Motor neuron (in vitro differentiated cells): ENCODE measurements at regions of chr2 and their contacts with region 1.

Region 1: GRCh38 chr2:197804049-197804757 is at the start of gene PLCL1:
- ATAC-seq: peak; percentile 96 to 99 (median 97)
- H3K4me3 ChIP-seq: peak within 1 kb of the TSS; percentile 61 to 90 (median 67)
- H3K27ac ChIP-seq: peak within 1 kb of the TSS in 1 of 2 donors; percentile 2
- H3K4me1 ChIP-seq: peaks cover 7 to 21% of the 10 kb centered on the region in 2 donors
- total RNA-seq, gene PLCL1: 7.0 to 16.8 (median 10.1) TPM

Region 2: GRCh38 chr2:197675711-197676188 is 128.5 kb before region 1 on chr2:
- in situ Hi-C with region 1: no loop called
- ATAC-seq: peak in 6 of 8 experiments; percentile 49 to 77 (median 70)
- H3K4me3 ChIP-seq: peak overlapping the region; percentile 22 to 34 (median 28)
- H3K27ac ChIP-seq: no peak overlapping the region
- H3K4me1 ChIP-seq: peaks cover 0 to 11% of the 10 kb centered on the region in 2 donors

Region 3: GRCh38 chr2:198100346-198100745 is 296.1 kb after region 1 on chr2:
- in situ Hi-C with region 1: loop called in 2 of 9 experiments (anchors 25 kb)
- ATAC-seq: peak in 2 of 8 experiments; percentile 82 to 84
- H3K4me3 ChIP-seq: no peak overlapping the region
- H3K27ac ChIP-seq: no peak overlapping the region
- H3K4me1 ChIP-seq: peaks cover 10 to 16% of the 10 kb centered on the region in 2 donors

Region 4: DNA sequence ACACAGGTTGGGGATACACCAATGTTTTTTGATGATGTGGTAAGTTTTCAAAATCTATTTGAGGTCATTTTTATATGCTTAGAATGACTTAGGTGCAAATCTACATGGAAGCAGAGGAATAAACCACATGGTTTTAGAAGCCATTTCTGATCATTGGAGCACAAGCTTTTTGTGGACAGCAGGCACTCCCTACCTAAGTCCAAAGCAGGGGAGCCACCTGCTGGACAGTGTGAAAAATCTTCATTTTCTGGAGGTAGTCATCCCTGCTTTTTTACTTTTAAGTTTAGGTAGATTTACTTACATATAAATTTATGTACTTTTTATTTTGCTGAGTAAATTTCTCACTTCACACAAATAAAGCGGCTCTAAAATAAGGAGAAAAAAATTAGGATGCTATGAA is 323.4 kb after region 1 on chr2:
- in situ Hi-C with region 1: loop called in 4 of 9 experiments (anchors 10 to 25 kb)
- ATAC-seq: peak in 4 of 8 experiments; percentile 28 to 76 (median 69)
- H3K4me3 ChIP-seq: no peak overlapping the region
- H3K27ac ChIP-seq: no peak overlapping the region
- H3K4me1 ChIP-seq: no peaks in the 10 kb centered on the region

Region 5: GRCh38 chr2:198296665-198297308 is 492.6 kb after region 1 on chr2:
- in situ Hi-C with region 1: loop called in 8 of 9 experiments (anchors 5 to 25 kb)
- ATAC-seq: peak; percentile 82 to 100 (median 98)
- H3K4me3 ChIP-seq: no peak overlapping the region
- H3K27ac ChIP-seq: no peak overlapping the region
- H3K4me1 ChIP-seq: no peaks in the 10 kb centered on the region